MCF 10A (cell line): ENCODE measurements at regions of chr1 and their contacts with region 1.

Region 1: GRCh38 chr1:182802006-182802803 is 12.6 kb downstream of the NPL start:
- DNase-seq: peak; percentile 70
- H3K4me3 Mint-ChIP-seq: no peak overlapping the region
- H3K27ac Mint-ChIP-seq: peak overlapping the region; percentile 29
- H3K4me1 Mint-ChIP-seq: peaks cover 12% of the 10 kb centered on the region
- H3K27me3 Mint-ChIP-seq: no peaks in the 10 kb centered on the region
- CTCF ChIP-seq: no peak

Region 2: GRCh38 chr1:182588500-182589452 is 213.4 kb before region 1 on chr1 and contains the start of gene RNASEL:
- CTCF ChIA-PET with region 1: interaction called, 3 read pairs
- POLR2A ChIA-PET with region 1: interaction called, 17 read pairs
- intact Hi-C with region 1: no loop called
- DNase-seq: peak; percentile 85
- H3K4me3 Mint-ChIP-seq: peak within 1 kb of the TSS; percentile 84
- H3K27ac Mint-ChIP-seq: peak within 1 kb of the TSS; percentile 93
- H3K4me1 Mint-ChIP-seq: peaks cover 5% of the 10 kb centered on the region
- H3K27me3 Mint-ChIP-seq: no peaks in the 10 kb centered on the region
- CTCF ChIP-seq: no peak
- total RNA-seq, gene RNASEL: 4.2 and 8.0 TPM in 2 replicates

Region 3: DNA sequence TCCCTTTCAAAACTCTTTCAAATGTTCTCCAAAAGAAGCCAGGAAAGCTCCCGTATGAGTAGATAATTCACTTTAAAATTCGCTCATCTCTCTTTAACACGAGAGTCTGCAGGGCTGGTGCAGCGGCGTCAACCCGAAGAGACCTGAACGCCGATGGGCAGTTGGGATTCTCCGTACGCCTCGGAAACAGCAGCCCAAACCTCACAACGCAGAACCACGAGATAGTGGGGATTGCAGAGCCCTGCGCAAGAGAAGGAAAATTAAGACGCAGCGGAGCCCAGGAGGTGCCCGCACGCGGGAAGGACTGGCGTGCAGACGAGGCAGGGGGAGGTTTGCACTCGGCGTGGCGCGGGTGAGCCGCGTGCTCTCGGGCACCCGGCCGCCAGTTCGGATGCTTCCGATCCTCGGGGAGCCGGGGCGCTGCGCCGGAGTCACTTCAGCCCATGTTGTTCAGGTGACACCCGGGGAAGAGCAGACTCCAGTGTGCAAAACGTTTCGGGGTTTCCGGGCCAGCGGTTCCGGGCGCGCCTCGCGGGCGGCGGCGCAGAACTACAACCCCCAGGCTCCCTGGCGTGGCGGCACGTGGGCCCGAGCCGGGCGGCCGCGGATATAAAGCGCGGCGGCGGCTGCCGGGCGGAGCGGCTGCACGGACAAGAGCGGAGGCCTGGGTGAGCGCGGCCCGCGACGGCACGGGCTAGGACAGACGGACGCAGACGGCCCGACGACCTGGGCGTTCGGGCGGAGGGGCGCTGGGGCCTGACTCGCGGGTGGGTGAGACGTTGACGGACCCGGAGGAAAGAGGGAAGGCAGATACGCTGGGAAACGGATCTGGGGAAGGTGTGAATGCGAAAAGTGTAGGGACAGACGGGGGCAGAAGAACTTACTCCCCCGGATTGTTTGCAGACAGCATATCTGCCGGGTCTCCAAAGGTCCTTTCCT is 12.8 kb before region 1 on chr1 and contains the start of gene NPL:
- CTCF ChIA-PET with region 1: interaction called, 33 read pairs
- POLR2A ChIA-PET with region 1: interaction called, 43 read pairs
- intact Hi-C with region 1: no loop called
- DNase-seq: peak; percentile 80
- H3K4me3 Mint-ChIP-seq: peak within 1 kb of the TSS; percentile 86
- H3K27ac Mint-ChIP-seq: peak within 1 kb of the TSS; percentile 72
- H3K4me1 Mint-ChIP-seq: peaks cover 17% of the 10 kb centered on the region
- H3K27me3 Mint-ChIP-seq: no peaks in the 10 kb centered on the region
- CTCF ChIP-seq: no peak
- total RNA-seq, gene NPL: 4.5 and 6.2 TPM in 2 replicates

Region 4: DNA sequence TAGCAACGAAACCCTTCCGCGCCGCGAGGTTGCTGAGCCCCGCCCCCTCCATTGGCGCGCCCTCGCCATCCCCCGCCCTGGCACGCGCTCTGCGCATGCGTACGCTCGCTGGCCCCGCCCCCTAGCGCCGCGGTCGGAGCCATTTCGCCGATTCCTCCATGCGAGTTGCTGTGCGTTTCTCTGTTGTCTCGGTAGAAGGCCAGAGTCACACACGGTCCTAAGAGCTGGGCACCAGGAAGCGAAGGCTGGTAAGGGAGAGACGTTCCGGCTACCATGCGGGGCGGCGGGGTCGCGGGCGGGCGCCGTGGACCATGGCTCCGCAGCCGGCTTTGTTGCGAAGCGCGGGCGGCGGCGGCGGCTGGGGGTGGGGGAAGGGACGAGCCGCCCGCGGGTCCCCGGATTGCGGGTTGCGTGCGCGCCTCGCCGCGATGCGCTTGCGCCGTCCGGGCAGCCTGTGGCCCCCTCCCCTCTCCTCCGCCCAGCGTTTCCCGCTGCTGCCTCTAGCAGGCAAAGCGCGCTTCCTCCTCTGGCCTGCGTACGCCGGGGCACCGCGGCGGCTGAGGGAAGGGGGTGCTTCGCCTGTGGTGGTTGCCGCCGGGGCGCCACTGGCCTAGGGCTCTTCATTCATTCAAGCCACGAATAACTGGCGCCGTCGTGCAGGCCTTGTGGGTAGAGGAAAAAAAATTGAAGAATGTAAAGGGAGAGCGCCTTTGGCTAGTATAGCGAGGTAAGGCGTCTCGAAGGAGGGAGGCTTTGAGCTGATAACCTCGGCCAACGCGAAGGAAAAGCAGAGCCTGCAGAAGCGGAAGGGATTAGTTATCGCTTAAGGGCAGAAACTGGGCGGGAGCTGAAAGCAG is 37.2 kb after region 1 on chr1 and contains the start of gene DHX9:
- CTCF ChIA-PET with region 1: no interaction called
- POLR2A ChIA-PET with region 1: interaction called, 21 read pairs
- intact Hi-C with region 1: no loop called
- DNase-seq: peak; percentile 93
- H3K4me3 Mint-ChIP-seq: peak within 1 kb of the TSS; percentile 88
- H3K27ac Mint-ChIP-seq: peak within 1 kb of the TSS; percentile 80
- H3K4me1 Mint-ChIP-seq: peaks cover 32% of the 10 kb centered on the region
- H3K27me3 Mint-ChIP-seq: no peaks in the 10 kb centered on the region
- CTCF ChIP-seq: peak; percentile 17
- total RNA-seq, gene DHX9: 105 and 107 TPM in 2 replicates

Region 5: GRCh38 chr1:183030053-183030452 is 227.8 kb after region 1 on chr1:
- CTCF ChIA-PET with region 1: no interaction called
- POLR2A ChIA-PET with region 1: no interaction called
- intact Hi-C with region 1: no loop called
- DNase-seq: peak; percentile 88
- H3K4me3 Mint-ChIP-seq: peak overlapping the region; percentile 29
- H3K27ac Mint-ChIP-seq: peak overlapping the region; percentile 82
- H3K4me1 Mint-ChIP-seq: peaks cover 69% of the 10 kb centered on the region
- H3K27me3 Mint-ChIP-seq: no peaks in the 10 kb centered on the region
- CTCF ChIP-seq: no peak